Activated CD4-positive, alpha-beta T cell treated with anti-CD3 and anti-CD28 coated beads, Interleukin-2, amount 10 ng/mL, durations not matched to agents 7 days and 5 days (primary cell): ENCODE measurements at regions of chr14 and their contacts with region 1.

Region 1: GRCh38 chr14:24160850-24161804 is at the start of gene IRF9:
- DNase-seq: peak; percentile 98
- H3K4me3 Mint-ChIP-seq: peak within 1 kb of the TSS; percentile 93
- H3K27ac Mint-ChIP-seq: peak within 1 kb of the TSS; percentile 100
- H3K4me1 Mint-ChIP-seq: peaks cover 58% of the 10 kb centered on the region
- H3K27me3 Mint-ChIP-seq: no peaks in the 10 kb centered on the region
- total RNA-seq, gene IRF9: 285 to 286 TPM

Region 2: DNA sequence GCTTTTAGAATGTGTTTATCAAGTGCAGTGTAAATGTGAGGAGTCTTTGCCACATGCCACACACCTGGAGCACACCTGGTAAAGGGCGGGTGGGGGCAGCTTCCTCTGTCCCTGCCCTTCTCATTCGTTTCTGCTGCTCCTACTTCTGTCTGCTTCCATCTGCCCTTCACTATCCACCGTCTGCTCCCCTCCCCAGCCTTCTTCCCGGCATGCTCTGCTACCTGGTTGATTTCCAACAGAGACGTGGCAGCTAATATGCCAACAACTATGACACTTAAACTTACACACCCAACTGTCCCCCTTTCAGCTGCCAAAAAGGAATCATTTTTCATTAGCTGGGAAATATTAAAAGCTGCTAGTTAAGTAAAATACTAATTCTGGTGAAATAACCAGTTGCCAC is 118.4 kb before region 1 on chr14:
- CTCF ChIA-PET with region 1: no interaction called
- POLR2A ChIA-PET with region 1: no interaction called
- DNase-seq: no peak
- H3K4me3 Mint-ChIP-seq: no peak overlapping the region
- H3K27ac Mint-ChIP-seq: no peak overlapping the region
- H3K4me1 Mint-ChIP-seq: peaks cover 4% of the 10 kb centered on the region
- H3K27me3 Mint-ChIP-seq: peaks cover 10% of the 10 kb centered on the region

Region 3: GRCh38 chr14:24108336-24108874 is 52.7 kb before region 1 on chr14:
- CTCF ChIA-PET with region 1: interaction called, 33 read pairs
- POLR2A ChIA-PET with region 1: interaction called, 11 read pairs
- DNase-seq: no peak
- H3K4me3 Mint-ChIP-seq: no peak overlapping the region
- H3K27ac Mint-ChIP-seq: peak overlapping the region; percentile 96
- H3K4me1 Mint-ChIP-seq: peaks cover 44% of the 10 kb centered on the region
- H3K27me3 Mint-ChIP-seq: no peaks in the 10 kb centered on the region

Region 4: GRCh38 chr14:24141097-24141880 is 19.8 kb before region 1 on chr14 and contains the start of gene EMC9:
- CTCF ChIA-PET with region 1: interaction called, 69 read pairs
- POLR2A ChIA-PET with region 1: interaction called, 25 read pairs
- DNase-seq: peak; percentile 100
- H3K4me3 Mint-ChIP-seq: peak within 1 kb of the TSS; percentile 98
- H3K27ac Mint-ChIP-seq: peak within 1 kb of the TSS; percentile 89
- H3K4me1 Mint-ChIP-seq: peaks cover 72% of the 10 kb centered on the region
- H3K27me3 Mint-ChIP-seq: no peaks in the 10 kb centered on the region
- total RNA-seq, gene EMC9: 37.1 to 41.0 TPM

Region 5: GRCh38 chr14:24171422-24172260 is 10.5 kb after region 1 on chr14 and contains the start of gene REC8:
- CTCF ChIA-PET with region 1: interaction called, 49 read pairs
- POLR2A ChIA-PET with region 1: no interaction called
- DNase-seq: peak; percentile 67
- H3K4me3 Mint-ChIP-seq: peak within 1 kb of the TSS; percentile 69
- H3K27ac Mint-ChIP-seq: peak within 1 kb of the TSS; percentile 86
- H3K4me1 Mint-ChIP-seq: peaks cover 55% of the 10 kb centered on the region
- H3K27me3 Mint-ChIP-seq: no peaks in the 10 kb centered on the region
- total RNA-seq, gene REC8: 52.8 to 61.0 TPM

Region 6: GRCh38 chr14:24188251-24189058 is 27.3 kb after region 1 on chr14 and contains the start of gene IPO4:
- CTCF ChIA-PET with region 1: interaction called, 44 read pairs
- POLR2A ChIA-PET with region 1: no interaction called
- DNase-seq: peak; percentile 97
- H3K4me3 Mint-ChIP-seq: peak within 1 kb of the TSS; percentile 89
- H3K27ac Mint-ChIP-seq: peak within 1 kb of the TSS; percentile 93
- H3K4me1 Mint-ChIP-seq: peaks cover 56% of the 10 kb centered on the region
- H3K27me3 Mint-ChIP-seq: no peaks in the 10 kb centered on the region
- total RNA-seq, gene IPO4: 45.3 to 48.7 TPM

Region 7: DNA sequence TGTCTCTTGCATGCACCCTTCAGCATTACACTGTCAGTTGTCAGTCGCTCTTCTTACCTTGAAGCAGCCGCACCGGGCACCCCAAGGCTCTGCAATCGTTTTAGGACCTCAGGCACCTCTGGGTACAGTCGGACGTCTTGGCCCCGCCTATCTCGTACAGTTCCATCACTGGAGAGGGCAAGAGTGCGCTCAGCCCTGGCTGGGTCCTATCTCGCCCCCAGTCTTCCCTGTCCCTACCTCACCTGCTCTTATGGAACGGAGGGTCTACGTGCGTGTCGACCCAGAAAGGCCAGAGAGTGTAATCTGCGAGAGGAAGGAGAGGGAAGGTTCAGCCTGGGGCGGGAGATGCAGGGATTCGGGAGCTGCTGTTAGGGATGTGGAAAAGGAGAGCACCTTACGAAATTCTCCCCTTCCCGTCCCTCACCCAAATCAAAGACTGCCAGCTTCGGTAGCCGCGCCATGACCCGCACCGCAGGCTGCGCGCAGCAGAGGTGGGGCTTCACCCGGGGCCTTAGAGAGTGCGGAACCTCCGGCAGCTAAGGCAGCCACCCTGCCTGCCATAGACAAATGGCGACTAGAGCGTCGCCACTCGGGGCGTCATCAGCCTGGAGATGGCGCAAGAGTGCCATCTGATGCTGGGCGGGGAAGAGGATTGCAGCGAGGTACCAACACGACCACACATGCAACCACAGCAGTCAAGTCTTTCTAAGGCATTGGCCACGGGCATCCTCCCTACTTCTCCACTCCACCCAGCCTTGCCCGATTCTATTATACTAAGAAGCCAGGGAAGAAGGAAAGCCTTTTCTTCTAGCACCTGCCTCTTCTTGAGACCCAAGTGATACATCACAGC is 54.6 kb after region 1 on chr14 and contains the start of gene MDP1:
- CTCF ChIA-PET with region 1: interaction called, 14 read pairs
- POLR2A ChIA-PET with region 1: no interaction called
- DNase-seq: peak; percentile 92
- H3K4me3 Mint-ChIP-seq: peak within 1 kb of the TSS; percentile 92
- H3K27ac Mint-ChIP-seq: peak within 1 kb of the TSS; percentile 95
- H3K4me1 Mint-ChIP-seq: peaks cover 50% of the 10 kb centered on the region
- H3K27me3 Mint-ChIP-seq: no peaks in the 10 kb centered on the region
- total RNA-seq, gene MDP1: 10.1 to 10.7 TPM

Region 8: DNA sequence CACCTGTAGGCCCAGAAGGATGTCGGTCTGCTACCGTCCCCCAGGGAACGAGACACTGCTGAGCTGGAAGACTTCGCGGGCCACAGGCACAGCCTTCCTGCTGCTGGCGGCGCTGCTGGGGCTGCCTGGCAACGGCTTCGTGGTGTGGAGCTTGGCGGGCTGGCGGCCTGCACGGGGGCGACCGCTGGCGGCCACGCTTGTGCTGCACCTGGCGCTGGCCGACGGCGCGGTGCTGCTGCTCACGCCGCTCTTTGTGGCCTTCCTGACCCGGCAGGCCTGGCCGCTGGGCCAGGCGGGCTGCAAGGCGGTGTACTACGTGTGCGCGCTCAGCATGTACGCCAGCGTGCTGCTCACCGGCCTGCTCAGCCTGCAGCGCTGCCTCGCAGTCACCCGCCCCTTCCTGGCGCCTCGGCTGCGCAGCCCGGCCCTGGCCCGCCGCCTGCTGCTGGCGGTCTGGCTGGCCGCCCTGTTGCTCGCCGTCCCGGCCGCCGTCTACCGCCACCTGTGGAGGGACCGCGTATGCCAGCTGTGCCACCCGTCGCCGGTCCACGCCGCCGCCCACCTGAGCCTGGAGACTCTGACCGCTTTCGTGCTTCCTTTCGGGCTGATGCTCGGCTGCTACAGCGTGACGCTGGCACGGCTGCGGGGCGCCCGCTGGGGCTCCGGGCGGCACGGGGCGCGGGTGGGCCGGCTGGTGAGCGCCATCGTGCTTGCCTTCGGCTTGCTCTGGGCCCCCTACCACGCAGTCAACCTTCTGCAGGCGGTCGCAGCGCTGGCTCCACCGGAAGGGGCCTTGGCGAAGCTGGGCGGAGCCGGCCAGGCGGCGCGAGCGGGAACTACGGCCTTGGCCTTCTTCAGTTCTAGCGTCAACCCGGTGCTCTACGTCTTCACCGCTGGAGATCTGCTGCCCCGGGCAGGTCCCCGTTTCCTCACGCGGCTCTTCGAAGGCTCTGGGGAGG is 149.8 kb after region 1 on chr14 and contains the start of gene LTB4R:
- CTCF ChIA-PET with region 1: interaction called, 12 read pairs
- POLR2A ChIA-PET with region 1: no interaction called
- DNase-seq: peak; percentile 62
- H3K4me3 Mint-ChIP-seq: peak within 1 kb of the TSS; percentile 77
- H3K27ac Mint-ChIP-seq: peak within 1 kb of the TSS; percentile 87
- H3K4me1 Mint-ChIP-seq: peaks cover 81% of the 10 kb centered on the region
- H3K27me3 Mint-ChIP-seq: no peaks in the 10 kb centered on the region
- total RNA-seq, gene LTB4R: 26.6 to 28.3 TPM

Region 9: DNA sequence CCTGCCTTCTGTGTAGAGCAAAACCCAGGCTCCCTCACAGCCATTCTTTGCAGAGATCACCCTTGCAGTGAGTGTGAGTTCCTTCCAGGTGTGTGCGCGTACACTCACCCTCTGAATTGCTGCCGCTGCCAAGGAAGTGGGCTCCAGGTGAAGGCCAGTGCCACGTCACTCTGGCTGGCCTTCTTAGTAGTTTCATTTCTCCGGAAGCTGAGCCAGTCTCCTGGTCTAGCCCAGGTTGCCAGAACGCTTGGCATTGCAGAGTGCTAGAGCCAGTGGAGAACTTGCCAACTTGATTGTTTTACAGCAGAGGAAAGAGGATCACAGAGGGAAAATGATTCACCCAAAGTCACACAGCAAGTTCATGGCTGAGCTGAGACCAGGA is 257.4 kb after region 1 on chr14:
- CTCF ChIA-PET with region 1: no interaction called
- POLR2A ChIA-PET with region 1: no interaction called
- DNase-seq: no peak
- H3K4me3 Mint-ChIP-seq: no peak overlapping the region
- H3K27ac Mint-ChIP-seq: no peak overlapping the region
- H3K4me1 Mint-ChIP-seq: no peaks in the 10 kb centered on the region
- H3K27me3 Mint-ChIP-seq: peaks cover 8% of the 10 kb centered on the region